ENCODE measurements at regions of chr6 and their contacts with region 1.

Region 1: GRCh38 chr6:3157131-3157927 is at the start of gene TUBB2A:
- H3K4me3 Mint-ChIP-seq: peak within 1 kb of the TSS; percentile 74
- H3K27ac Mint-ChIP-seq: peak within 1 kb of the TSS; percentile 79
- H3K4me1 Mint-ChIP-seq: peaks cover 26% of the 10 kb centered on the region
- H3K27me3 Mint-ChIP-seq: peaks cover 52% of the 10 kb centered on the region

Region 2: DNA sequence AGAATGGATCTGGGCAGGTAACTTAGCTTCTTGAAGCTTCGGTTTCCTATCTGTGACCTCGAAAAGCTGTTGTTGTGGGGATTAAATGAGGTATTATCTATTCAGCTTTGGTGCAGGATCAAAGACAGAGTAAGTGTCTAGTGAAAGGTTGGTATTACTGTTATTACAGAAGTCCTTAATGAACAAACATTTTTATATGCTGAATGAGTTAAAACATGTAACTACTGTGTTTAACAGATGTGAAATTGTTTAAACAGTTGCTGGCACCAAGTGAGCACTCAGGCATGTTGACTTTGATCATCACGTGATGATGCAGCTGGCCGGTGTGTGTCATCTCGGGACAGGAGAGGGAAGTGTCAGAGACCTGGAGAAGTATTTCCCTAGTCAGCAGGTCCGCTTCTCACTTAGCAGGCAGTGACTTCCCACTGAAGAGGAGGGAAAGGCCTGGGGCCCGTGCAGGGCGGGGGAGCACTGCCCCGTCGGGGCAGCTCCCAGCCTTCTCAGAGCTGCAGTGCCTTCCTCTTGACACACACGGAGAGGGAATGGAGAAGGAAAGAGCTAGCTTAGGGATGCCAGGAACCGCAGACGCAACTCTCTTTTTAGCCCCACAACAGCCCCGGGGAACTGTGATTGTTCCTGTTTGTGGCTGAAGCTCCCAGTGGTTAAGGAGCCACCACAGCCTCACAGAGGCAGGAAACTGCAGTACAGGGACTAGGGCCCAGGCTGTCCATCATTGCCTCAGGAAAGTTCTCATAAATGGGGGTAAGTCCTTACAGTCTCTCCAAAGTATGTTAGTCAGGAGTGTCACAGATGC is 18.0 kb before region 1 on chr6:
- intact Hi-C with region 1: loop called (anchors 1 kb)
- H3K4me3 Mint-ChIP-seq: peak overlapping the region; percentile 59
- H3K27ac Mint-ChIP-seq: peak overlapping the region; percentile 85
- H3K4me1 Mint-ChIP-seq: peaks cover 22% of the 10 kb centered on the region
- H3K27me3 Mint-ChIP-seq: no peaks in the 10 kb centered on the region

Region 3: DNA sequence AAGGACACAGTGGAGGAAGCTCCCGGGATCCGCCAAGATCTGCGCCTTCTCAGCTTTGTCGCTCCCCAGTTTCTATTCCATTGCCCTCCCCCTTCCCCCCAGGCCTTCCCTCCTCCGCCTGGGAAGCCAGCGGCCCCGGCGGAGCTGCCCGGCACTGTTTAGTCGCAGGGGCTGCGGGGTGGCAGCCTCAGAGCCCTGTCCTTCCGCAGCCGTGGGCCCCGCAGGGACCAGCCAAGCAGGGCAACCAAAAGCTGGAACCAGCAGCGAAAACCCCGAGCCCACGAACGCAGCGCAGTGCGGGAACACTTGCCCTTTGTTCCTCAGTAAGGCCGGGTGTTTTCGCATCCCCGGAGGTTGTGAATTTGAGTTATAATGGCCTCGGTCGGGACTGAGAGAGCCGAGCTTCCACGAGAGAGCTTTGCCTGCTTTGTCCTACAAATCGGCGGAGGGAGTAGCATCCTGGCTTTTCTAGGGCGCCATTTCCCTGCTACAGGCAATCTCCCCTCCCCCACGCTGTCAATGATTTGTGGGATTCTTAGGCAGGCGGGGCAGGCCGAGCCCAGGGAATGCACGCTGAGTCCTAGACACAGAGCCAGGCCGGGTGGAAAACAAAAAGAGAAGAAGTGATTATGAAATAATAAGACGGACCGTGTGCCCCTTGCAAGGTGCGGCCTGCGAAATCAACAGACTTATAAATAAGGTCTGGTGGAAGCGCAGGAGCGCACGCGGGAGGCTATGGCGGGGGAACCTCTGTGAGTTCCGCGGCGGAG is 74.1 kb after region 1 on chr6:
- intact Hi-C with region 1: no loop called
- H3K4me3 Mint-ChIP-seq: peak overlapping the region; percentile 48
- H3K27ac Mint-ChIP-seq: peak overlapping the region; percentile 14
- H3K4me1 Mint-ChIP-seq: peaks cover 55% of the 10 kb centered on the region
- H3K27me3 Mint-ChIP-seq: peaks cover 92% of the 10 kb centered on the region

Measured in dendritic cell treated with granulocyte-macrophage colony-stimulating factor and Interleukin-4, amounts not matched to agents 40 ng/mL and 50 ng/mL, for 4 days (primary cell).